ENCODE measurements at regions of chr6 and their contacts with region 1.

Region 1: GRCh38 chr6:62891065-62891647 is 320.1 kb upstream of the FKBP1C start:
- DNase-seq: peak; percentile 25
- ATAC-seq: no peak
- H3K4me3 ChIP-seq: no peak overlapping the region
- H3K27ac ChIP-seq: no peak overlapping the region
- H3K4me1 ChIP-seq: no peaks in the 10 kb centered on the region
- H3K27me3 ChIP-seq: peaks cover 7% of the 10 kb centered on the region; the same call in 1 of the 2 replicates
- CTCF ChIP-seq: peak; percentile 52

Region 2: GRCh38 chr6:62746968-62747367 is 144.2 kb before region 1 on chr6:
- CTCF ChIA-PET with region 1: no interaction called
- POLR2A ChIA-PET with region 1: no interaction called
- intact Hi-C with region 1: loop called (anchors 5 kb)
- DNase-seq: no peak
- ATAC-seq: no peak
- H3K4me3 ChIP-seq: no peak overlapping the region
- H3K27ac ChIP-seq: no peak overlapping the region
- H3K4me1 ChIP-seq: no peaks in the 10 kb centered on the region
- H3K27me3 ChIP-seq: no peaks in the 10 kb centered on the region
- CTCF ChIP-seq: no peak

Region 3: DNA sequence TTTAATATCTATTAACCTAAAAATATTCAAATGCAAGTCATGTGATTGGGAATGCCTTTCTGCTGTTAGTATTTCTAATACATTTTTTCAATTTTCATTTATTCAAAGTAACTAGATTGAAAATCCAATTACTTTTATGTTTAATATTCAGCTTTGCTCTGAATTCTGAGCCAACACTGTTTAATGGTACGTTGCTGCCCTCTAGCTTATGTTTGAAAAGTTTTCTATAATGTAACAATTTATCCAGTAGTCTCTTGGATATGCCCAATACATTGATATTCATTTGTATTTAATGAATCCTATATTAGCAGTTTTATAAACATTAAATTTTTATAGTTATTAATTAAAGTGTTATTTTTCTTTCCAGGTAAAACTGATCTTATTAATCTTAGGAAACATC is 381.2 kb after region 1 on chr6:
- CTCF ChIA-PET with region 1: no interaction called
- POLR2A ChIA-PET with region 1: no interaction called
- intact Hi-C with region 1: loop called (anchors 10 kb)
- DNase-seq: peak; percentile 48
- ATAC-seq: no peak
- H3K4me3 ChIP-seq: no peak overlapping the region
- H3K27ac ChIP-seq: no peak overlapping the region
- H3K4me1 ChIP-seq: no peaks in the 10 kb centered on the region
- H3K27me3 ChIP-seq: peaks cover 19% of the 10 kb centered on the region; the same call in 1 of the 2 replicates
- CTCF ChIP-seq: peak; percentile 58

Measured in PC-3 (cell line).